GM12878 (cell line): ENCODE measurements at regions of chr3 and their contacts with region 1.

Region 1: GRCh38 chr3:128680602-128681368 is 30.2 kb upstream of the RPN1 start:
- DNase-seq: peak; percentile 93
- ATAC-seq: peak; percentile 99
- H3K4me3 ChIP-seq: peak overlapping the region; percentile 83
- H3K27ac ChIP-seq: peak overlapping the region; percentile 98
- H3K4me1 ChIP-seq: 0 out of 2 replicates have a peak, but pooled peaks cover under 1% of the 10 kb centered on the region
- H3K27me3 ChIP-seq: no peaks in the 10 kb centered on the region
- CTCF ChIP-seq: peak; percentile 96 to 99 (median 98)
- EP300 ChIP-seq: 0 out of 4 replicates have a peak, but pooled peaks of 1 of the 2 experiments have one; percentile 25
- POLR2A ChIP-seq: peak; percentile 98
- RAD21 ChIP-seq: peak; percentile 85

Region 2: GRCh38 chr3:128546646-128547045 is 134.1 kb before region 1 on chr3:
- CTCF ChIA-PET with region 1: no interaction called
- POLR2A ChIA-PET with region 1: no interaction called
- RAD21 ChIA-PET with region 1: no interaction called
- SMC1A ChIA-PET with region 1: no interaction called
- in situ Hi-C with region 1: no loop called
- intact Hi-C with region 1: no loop called
- DNase-seq: no peak
- ATAC-seq: no peak
- H3K4me3 ChIP-seq: no peak overlapping the region
- H3K27ac ChIP-seq: no peak overlapping the region
- H3K4me1 ChIP-seq: no peaks in the 10 kb centered on the region
- H3K27me3 ChIP-seq: no peaks in the 10 kb centered on the region; a peak in 1 of 4 replicates
- CTCF ChIP-seq: no peak
- EP300 ChIP-seq: no peak
- POLR2A ChIP-seq: no peak
- RAD21 ChIP-seq: no peak

Region 3: DNA sequence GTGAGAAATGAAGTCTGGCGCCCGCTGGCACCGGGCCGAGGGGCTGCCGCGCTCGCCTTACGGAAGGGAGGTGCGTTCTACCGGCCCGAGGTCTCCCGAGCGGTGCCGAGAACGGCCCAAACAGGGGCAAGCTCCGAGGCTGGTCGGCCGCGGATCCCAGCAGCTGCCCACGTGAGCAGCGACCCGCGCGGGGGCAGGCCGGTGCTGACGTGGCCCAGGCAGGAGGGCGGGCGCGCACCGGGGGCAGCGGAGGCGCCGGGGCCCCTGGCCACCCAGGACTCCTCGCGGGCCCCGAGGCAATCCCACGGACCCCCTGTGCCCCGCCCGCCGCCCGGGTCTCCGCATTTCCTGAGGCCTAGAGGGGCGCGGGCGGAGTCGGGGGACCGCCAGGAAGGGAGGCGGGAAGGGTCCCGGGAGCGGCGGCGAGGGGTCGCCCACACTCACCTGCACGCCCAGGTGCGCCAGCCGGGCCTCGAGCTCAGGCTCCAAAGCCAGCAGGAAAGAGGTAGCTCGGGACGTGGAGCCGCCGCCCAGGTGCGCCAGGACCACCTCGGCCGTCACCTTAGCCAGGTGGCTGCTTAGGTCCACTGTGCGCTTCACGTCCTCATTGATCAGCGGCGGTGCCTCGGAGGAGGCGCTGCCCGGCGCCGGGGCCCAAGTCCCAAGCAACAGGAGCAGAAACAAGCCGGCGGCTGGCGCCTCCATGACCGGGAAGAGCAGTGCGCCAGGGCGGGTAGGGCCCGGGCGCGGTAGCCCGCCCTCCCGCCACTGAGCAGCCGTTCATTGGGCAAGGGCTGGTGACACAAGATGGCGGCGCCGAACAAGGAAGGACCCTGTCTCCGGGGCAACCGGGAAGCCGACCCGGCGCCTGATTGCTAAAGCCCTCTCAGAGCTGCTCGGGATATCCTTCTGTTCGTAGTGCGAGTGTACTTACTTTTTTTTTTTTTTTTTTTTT is 30.4 kb before region 1 on chr3 and contains the start of gene RPN1:
- CTCF ChIA-PET with region 1: interaction called, 26 read pairs
- POLR2A ChIA-PET with region 1: interaction called, 15 read pairs
- RAD21 ChIA-PET with region 1: interaction called, 12 read pairs
- SMC1A ChIA-PET with region 1: interaction called, 6 read pairs
- in situ Hi-C with region 1: no loop called
- intact Hi-C with region 1: loop called (anchors 2 kb)
- DNase-seq: peak; percentile 74
- ATAC-seq: peak; percentile 98
- H3K4me3 ChIP-seq: peak within 1 kb of the TSS; percentile 100
- H3K27ac ChIP-seq: peak within 1 kb of the TSS; percentile 90
- H3K4me1 ChIP-seq: no peaks in the 10 kb centered on the region
- H3K27me3 ChIP-seq: no peaks in the 10 kb centered on the region
- CTCF ChIP-seq: no peak
- EP300 ChIP-seq: no peak
- POLR2A ChIP-seq: peak; percentile 94
- RAD21 ChIP-seq: no peak
- polyA plus RNA-seq, gene RPN1: 56.1 to 58.3 TPM

Region 4: DNA sequence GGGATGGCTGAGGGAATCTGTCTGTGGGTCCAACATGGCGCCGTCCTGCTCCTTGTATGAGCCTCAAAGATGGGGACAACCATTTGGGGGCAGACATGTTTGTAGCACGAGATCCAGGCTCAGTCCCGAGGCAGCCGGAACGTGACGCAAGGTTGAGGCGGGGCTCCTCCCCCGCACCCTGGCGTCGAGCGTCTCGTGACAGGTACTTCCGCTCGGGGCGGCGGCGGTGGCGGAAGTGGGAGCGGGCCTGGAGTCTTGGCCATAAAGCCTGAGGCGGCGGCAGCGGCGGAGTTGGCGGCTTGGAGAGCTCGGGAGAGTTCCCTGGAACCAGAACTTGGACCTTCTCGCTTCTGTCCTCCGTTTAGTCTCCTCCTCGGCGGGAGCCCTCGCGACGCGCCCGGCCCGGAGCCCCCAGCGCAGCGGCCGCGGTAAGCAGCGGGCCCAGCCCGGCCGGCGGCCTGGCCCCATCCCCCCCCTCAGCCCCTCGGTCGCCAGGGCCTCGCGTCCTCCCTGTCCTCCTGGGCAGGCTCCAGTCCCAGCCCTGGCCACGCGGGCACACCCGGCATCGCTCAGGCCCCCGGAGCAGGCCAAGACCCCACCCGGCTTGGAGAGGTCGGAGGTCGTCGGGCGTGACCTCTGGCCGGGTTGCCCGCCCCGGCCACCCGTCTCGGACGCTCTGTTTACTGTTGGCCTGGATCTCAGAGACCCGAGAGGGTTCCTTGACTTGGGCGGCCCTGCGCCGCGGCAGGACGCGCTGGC is 45.3 kb after region 1 on chr3 and contains the start of gene RAB7A:
- CTCF ChIA-PET with region 1: interaction called, 15 read pairs
- POLR2A ChIA-PET with region 1: interaction called, 13 read pairs
- RAD21 ChIA-PET with region 1: interaction called, 14 read pairs
- SMC1A ChIA-PET with region 1: interaction called, 26 read pairs
- in situ Hi-C with region 1: no loop called
- intact Hi-C with region 1: loop called (anchors 1 kb)
- DNase-seq: peak; percentile 96
- ATAC-seq: peak; percentile 92
- H3K4me3 ChIP-seq: peak within 1 kb of the TSS; percentile 79
- H3K27ac ChIP-seq: peak within 1 kb of the TSS; percentile 86
- H3K4me1 ChIP-seq: peaks cover 12% of the 10 kb centered on the region
- H3K27me3 ChIP-seq: no peaks in the 10 kb centered on the region
- CTCF ChIP-seq: 0 out of 6 replicates have a peak, but pooled peaks of 1 of the 3 experiments have one; percentile 2
- EP300 ChIP-seq: no peak
- POLR2A ChIP-seq: peak; percentile 95
- RAD21 ChIP-seq: no peak
- polyA plus RNA-seq, gene RAB7A: 40.3 to 43.0 TPM

Region 5: DNA sequence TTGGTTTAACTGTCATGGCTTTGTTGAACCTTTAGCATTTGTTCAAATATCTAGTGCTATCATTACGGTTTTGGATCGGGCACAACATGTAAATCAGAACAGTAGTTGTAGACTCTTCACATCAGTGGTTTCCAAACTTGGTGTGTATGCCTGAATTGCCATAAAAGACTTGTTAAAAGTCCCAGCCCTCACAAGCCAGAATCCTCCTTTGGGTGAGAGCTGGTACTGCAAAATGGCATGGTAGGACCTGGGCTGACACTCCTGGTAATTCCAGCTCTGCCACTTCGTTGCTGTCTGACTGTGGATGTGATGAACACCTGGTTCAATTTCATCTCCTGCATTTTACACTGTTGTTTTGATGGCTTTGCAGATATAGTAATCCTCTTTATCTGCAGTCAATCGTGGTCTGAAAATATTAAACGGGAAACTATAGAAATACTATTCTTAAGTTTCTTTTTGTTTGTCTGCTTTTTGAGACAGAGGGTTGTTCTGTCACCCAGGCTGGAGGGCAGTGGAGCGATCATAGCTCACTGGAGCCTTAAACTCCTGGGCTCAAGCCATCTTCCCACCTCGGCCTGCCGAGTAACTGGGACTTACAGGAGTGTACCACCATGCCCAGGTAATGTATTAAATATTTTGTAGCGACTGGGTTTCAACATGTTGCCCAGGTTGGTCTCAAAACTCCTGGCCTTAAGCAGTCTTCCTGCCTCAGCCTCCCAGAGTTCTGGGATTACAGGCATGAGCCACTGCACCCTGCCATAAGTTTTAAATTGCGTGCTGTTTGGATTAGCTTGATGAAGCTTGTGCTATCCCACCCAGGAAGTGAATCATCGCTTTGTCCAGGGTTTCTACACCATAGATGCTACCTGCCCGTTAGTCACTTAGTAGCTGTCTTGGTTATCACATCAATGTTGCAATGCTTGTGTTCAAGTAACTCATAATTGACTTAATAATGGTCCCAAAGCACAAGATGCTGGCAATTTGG is 106.8 kb after region 1 on chr3:
- CTCF ChIA-PET with region 1: interaction called, 44 read pairs
- POLR2A ChIA-PET with region 1: interaction called, 3 read pairs
- RAD21 ChIA-PET with region 1: interaction called, 112 read pairs
- SMC1A ChIA-PET with region 1: interaction called, 101 read pairs
- in situ Hi-C with region 1: loop called (anchors 5 kb)
- intact Hi-C with region 1: no loop called
- DNase-seq: no peak
- ATAC-seq: peak; percentile 87
- H3K4me3 ChIP-seq: peak overlapping the region; percentile 57; the same call in 1 of the 2 replicates
- H3K27ac ChIP-seq: peak overlapping the region; percentile 24
- H3K4me1 ChIP-seq: peaks cover 55% of the 10 kb centered on the region
- H3K27me3 ChIP-seq: no peaks in the 10 kb centered on the region
- CTCF ChIP-seq: peak; percentile 26 to 59 (median 59); a peak in 5 of 6 replicates
- EP300 ChIP-seq: no peak
- POLR2A ChIP-seq: no peak
- RAD21 ChIP-seq: peak; percentile 36; the same call in 1 of the 2 replicates

Region 6: DNA sequence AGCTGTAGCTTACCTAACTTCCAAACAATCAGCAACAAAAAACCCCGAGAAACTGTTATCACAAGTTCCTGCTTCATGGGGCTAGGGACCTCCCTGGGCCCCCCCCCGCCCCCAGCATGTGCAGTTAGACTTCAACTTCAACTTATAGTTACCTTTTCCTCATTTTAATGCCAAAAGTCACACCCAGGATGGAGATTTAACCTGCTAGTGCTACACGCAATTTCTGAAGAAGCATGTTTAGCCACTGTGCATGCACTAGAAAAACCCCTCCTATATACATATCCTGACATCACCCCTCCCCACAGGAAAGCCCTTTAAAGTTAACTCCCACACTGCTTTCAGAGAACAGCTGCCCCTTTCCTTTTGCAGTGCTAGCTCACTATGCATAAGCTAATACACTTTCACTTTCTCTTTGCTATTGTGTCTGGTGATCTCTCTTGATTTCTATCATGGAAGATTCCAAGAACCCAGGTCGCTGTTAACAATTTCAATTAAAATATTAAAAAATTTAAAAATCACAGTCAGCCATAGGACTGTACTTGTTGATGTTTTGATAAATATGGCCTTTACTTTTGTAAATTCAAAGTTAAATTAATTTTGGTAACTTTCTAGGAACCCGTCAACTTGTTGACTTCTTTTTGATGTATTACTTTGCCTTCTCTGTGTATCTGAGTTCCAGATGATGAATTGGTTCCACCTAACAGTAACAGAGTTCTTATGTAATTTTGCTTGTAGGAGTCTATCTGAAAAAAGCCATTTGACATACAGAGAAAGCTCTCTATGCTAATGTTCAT is 123.4 kb after region 1 on chr3:
- CTCF ChIA-PET with region 1: interaction called, 244 read pairs
- POLR2A ChIA-PET with region 1: interaction called, 12 read pairs
- RAD21 ChIA-PET with region 1: interaction called, 112 read pairs
- SMC1A ChIA-PET with region 1: interaction called, 27 read pairs
- in situ Hi-C with region 1: no loop called
- intact Hi-C with region 1: loop called (anchors 2 kb)
- DNase-seq: peak; percentile 83
- ATAC-seq: peak; percentile 97
- H3K4me3 ChIP-seq: no peak overlapping the region
- H3K27ac ChIP-seq: peak overlapping the region; percentile 49
- H3K4me1 ChIP-seq: peaks cover 33% of the 10 kb centered on the region
- H3K27me3 ChIP-seq: no peaks in the 10 kb centered on the region
- CTCF ChIP-seq: no peak
- EP300 ChIP-seq: peak; percentile 12 to 55; a peak in 3 of 4 replicates
- POLR2A ChIP-seq: no peak
- RAD21 ChIP-seq: no peak

Region 7: GRCh38 chr3:128835096-128835495 is 154.3 kb after region 1 on chr3:
- CTCF ChIA-PET with region 1: no interaction called
- POLR2A ChIA-PET with region 1: no interaction called
- RAD21 ChIA-PET with region 1: no interaction called
- SMC1A ChIA-PET with region 1: no interaction called
- in situ Hi-C with region 1: no loop called
- intact Hi-C with region 1: no loop called
- DNase-seq: no peak
- ATAC-seq: no peak
- H3K4me3 ChIP-seq: no peak overlapping the region
- H3K27ac ChIP-seq: no peak overlapping the region
- H3K4me1 ChIP-seq: no peaks in the 10 kb centered on the region
- H3K27me3 ChIP-seq: no peaks in the 10 kb centered on the region
- CTCF ChIP-seq: no peak
- EP300 ChIP-seq: no peak
- POLR2A ChIP-seq: no peak
- RAD21 ChIP-seq: no peak

Region 8: GRCh38 chr3:128879125-128879969 is 198.6 kb after region 1 on chr3 and contains the start of gene ACAD9:
- CTCF ChIA-PET with region 1: interaction called, 53 read pairs
- POLR2A ChIA-PET with region 1: interaction called, 5 read pairs
- RAD21 ChIA-PET with region 1: interaction called, 9 read pairs
- SMC1A ChIA-PET with region 1: interaction called, 16 read pairs
- in situ Hi-C with region 1: no loop called
- intact Hi-C with region 1: loop called (anchors 2 kb)
- DNase-seq: peak; percentile 97
- ATAC-seq: peak; percentile 92
- H3K4me3 ChIP-seq: peak within 1 kb of the TSS; percentile 92
- H3K27ac ChIP-seq: peak within 1 kb of the TSS; percentile 85
- H3K4me1 ChIP-seq: peaks cover 18% of the 10 kb centered on the region
- H3K27me3 ChIP-seq: no peaks in the 10 kb centered on the region
- CTCF ChIP-seq: no peak
- EP300 ChIP-seq: peak; percentile 48 to 53; a peak in 1 of 4 replicates
- POLR2A ChIP-seq: peak; percentile 96
- RAD21 ChIP-seq: no peak
- polyA plus RNA-seq, gene ACAD9: 12.7 to 21.5 TPM